Aorta (tissue), 5 donors: ENCODE measurements at regions of chr10 and their contacts with region 1.

Region 1: GRCh38 chr10:22251751-22252223 is 34.0 kb upstream of the EBLN1 start:
- DNase-seq: peak; percentile 81 to 83
- ATAC-seq: peak; percentile 78
- H3K4me3 ChIP-seq: peak overlapping the region; percentile 65 to 80
- H3K27ac ChIP-seq: peak overlapping the region; percentile 92 to 93
- H3K4me1 ChIP-seq: no peaks in the 10 kb centered on the region
- H3K27me3 ChIP-seq: no peaks in the 10 kb centered on the region

Region 2: GRCh38 chr10:22228943-22229801 is 22.6 kb before region 1 on chr10:
- intact Hi-C with region 1: loop called in 1 of 2 experiments (anchors 2 kb)
- DNase-seq: peak; percentile 89 to 94
- ATAC-seq: peak; percentile 99
- H3K4me3 ChIP-seq: peak overlapping the region; percentile 70 to 90
- H3K27ac ChIP-seq: peak overlapping the region in 1 of 2 donors; percentile 70
- H3K4me1 ChIP-seq: no peaks in the 10 kb centered on the region
- H3K27me3 ChIP-seq: no peaks in the 10 kb centered on the region

Region 3: GRCh38 chr10:22316285-22317120 is 64.7 kb after region 1 on chr10 and contains the start of gene COMMD3:
- intact Hi-C with region 1: loop called (anchors 5 kb)
- DNase-seq: peak; percentile 93 to 95
- ATAC-seq: peak; percentile 96
- H3K4me3 ChIP-seq: peak within 1 kb of the TSS; percentile 68 to 73
- H3K27ac ChIP-seq: peak within 1 kb of the TSS in 1 of 2 donors; percentile 60
- H3K4me1 ChIP-seq: no peaks in the 10 kb centered on the region
- H3K27me3 ChIP-seq: no peaks in the 10 kb centered on the region
- total RNA-seq, gene COMMD3: 38.9 to 43.7 TPM

Region 4: GRCh38 chr10:22550732-22551131 is 298.9 kb after region 1 on chr10:
- intact Hi-C with region 1: loop called in 1 of 2 experiments (anchors 10 kb)
- DNase-seq: peak in 1 of 2 donors; percentile 82
- ATAC-seq: no peak
- H3K4me3 ChIP-seq: no peak overlapping the region
- H3K27ac ChIP-seq: no peak overlapping the region
- H3K4me1 ChIP-seq: peaks cover 2 to 3% of the 10 kb centered on the region in 2 donors
- H3K27me3 ChIP-seq: no peaks in the 10 kb centered on the region

Region 5: DNA sequence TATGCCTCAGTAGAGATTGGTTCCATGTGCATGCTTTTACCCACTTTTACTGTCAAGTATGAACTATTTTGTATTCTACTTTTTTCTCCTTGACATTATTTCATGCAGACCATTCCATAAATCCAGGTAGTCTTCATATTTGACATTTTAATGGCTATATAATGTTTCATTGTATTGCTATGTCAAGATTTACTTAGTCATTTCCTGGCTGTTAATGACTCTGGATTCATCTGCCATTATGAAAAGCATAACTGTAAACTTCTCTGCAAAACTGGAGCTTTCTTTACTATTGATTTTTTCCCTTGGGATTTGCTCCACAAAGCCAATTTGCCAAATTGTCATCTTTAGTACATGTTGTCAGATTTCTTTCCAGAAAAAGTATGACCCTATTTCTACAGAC is 836.8 kb after region 1 on chr10:
- intact Hi-C with region 1: no loop called
- DNase-seq: no peak
- ATAC-seq: no peak
- H3K4me3 ChIP-seq: no peak overlapping the region
- H3K27ac ChIP-seq: no peak overlapping the region
- H3K4me1 ChIP-seq: no peaks in the 10 kb centered on the region
- H3K27me3 ChIP-seq: no peaks in the 10 kb centered on the region